Breast epithelium (tissue), 4 donors: ENCODE measurements at regions of chr17 and their contacts with region 1.

Region 1: GRCh38 chr17:58377093-58377601 is 25.1 kb upstream of the SUPT4H1 start:
- DNase-seq: peak in 1 of 2 donors; percentile 73
- H3K4me3 ChIP-seq: no peak overlapping the region
- H3K27ac ChIP-seq: peak overlapping the region; percentile 33 to 77
- H3K4me1 ChIP-seq: no peaks in the 10 kb centered on the region
- H3K27me3 ChIP-seq: no peaks in the 10 kb centered on the region
- CTCF ChIP-seq: no peak
- POLR2A ChIP-seq: no peak

Region 2: GRCh38 chr17:57211543-57211942 is 1165.6 kb before region 1 on chr17:
- intact Hi-C with region 1: loop called (anchors 5 kb)
- DNase-seq: no peak
- H3K4me3 ChIP-seq: no peak overlapping the region
- H3K27ac ChIP-seq: no peak overlapping the region
- H3K4me1 ChIP-seq: no peaks in the 10 kb centered on the region
- H3K27me3 ChIP-seq: no peaks in the 10 kb centered on the region
- CTCF ChIP-seq: no peak
- POLR2A ChIP-seq: no peak

Region 3: DNA sequence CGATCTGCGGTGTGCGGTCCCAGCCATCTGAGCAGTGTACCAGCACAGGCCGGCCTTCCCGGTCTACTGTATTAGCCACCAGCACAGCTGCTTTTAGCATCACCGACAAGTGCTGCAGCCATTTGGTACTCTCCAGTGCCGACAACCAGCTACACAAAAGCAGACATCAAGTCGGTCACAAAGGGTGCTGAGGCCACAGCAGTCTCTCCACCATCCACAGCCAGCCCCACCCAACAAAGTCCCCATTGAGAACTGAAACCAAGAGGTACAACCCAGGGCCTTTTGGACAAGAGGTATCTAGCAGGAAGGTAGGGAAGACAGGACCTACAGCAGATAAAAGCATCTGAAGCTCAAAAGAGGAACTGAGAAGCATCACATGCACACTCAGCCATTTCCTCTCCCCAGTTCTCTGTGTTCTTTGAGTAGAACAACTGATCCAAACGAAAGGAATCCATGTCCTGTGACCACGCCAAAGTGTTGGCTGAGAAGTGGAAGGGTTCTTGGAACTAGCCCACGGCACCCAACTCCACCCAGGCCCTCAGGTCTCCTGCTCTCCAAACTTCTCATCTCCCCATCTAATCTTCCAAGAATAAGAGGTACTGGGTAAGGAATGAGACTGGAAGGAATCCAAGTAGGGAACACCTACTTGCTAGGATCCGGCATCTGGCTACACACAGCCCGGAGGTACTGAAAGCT is 127.8 kb after region 1 on chr17:
- intact Hi-C with region 1: no loop called
- DNase-seq: no peak
- H3K4me3 ChIP-seq: no peak overlapping the region
- H3K27ac ChIP-seq: no peak overlapping the region
- H3K4me1 ChIP-seq: no peaks in the 10 kb centered on the region
- H3K27me3 ChIP-seq: no peaks in the 10 kb centered on the region
- CTCF ChIP-seq: no peak
- POLR2A ChIP-seq: no peak